ENCODE measurements at regions of chr2 and their contacts with region 1.

Region 1: GRCh38 chr2:231715258-231715997 is 7.1 kb downstream of the PTMA start:
- DNase-seq: peak; percentile 81
- H3K4me3 ChIP-seq: no peak overlapping the region
- H3K27ac ChIP-seq: peak overlapping the region in 3 of 4 donors; percentile 76 to 85 (median 83)
- H3K4me1 ChIP-seq: peaks cover 20 to 37% (median 22%) of the 10 kb centered on the region in 4 donors
- H3K27me3 ChIP-seq: no peaks in the 10 kb centered on the region
- CTCF ChIP-seq: peak; percentile 91 to 98 (median 93)
- EP300 ChIP-seq: no peak
- POLR2A ChIP-seq: no peak

Region 2: DNA sequence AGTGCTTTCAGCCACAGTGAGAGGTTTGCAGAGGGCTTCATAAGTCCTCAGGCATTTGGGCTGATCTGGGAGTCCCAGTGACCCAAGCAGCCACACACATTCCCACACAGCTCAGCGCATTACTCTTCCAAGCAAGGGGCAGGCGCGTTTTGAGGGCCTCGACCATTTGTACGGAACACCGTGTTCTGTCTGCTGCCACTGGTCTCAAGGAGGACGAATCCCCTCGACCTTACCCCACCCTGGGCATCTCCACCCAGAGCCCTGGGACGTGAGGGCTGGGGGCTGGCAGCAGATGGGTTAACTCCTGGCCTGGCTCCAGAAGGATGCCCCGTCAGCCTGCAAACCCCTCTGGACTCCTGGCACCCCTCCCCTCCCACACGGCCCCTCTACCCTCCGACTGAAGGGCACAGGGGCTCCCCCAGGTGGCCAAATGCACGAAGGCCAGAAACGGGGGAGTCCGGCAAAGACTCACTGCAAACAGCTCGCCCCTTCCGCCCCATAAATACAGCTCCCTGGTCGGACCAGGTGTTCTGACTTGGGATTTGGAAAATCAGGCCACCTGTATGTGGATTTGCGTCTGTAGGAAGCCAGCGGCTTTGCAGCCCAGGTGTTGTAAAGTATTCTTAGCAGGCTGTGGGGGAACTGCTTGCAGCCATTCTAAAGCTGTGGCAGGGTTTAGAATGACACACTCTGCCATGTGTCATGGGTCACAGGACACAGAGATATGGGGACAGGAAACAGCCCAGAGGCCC is 40.7 kb before region 1 on chr2:
- in situ Hi-C with region 1: loop called in 2 of 4 experiments (anchors 5 kb)
- intact Hi-C with region 1: loop called (anchors 1 kb)
- DNase-seq: peak; percentile 83
- H3K4me3 ChIP-seq: no peak overlapping the region
- H3K27ac ChIP-seq: peak overlapping the region; percentile 96 to 100 (median 98)
- H3K4me1 ChIP-seq: peaks cover 49 to 63% (median 56%) of the 10 kb centered on the region in 4 donors
- H3K27me3 ChIP-seq: no peaks in the 10 kb centered on the region
- CTCF ChIP-seq: peak; percentile 76 to 94 (median 88)
- EP300 ChIP-seq: no peak
- POLR2A ChIP-seq: no peak

Region 3: GRCh38 chr2:233108611-233109490 is 1393.4 kb after region 1 on chr2:
- in situ Hi-C with region 1: no loop called
- intact Hi-C with region 1: no loop called
- DNase-seq: no peak
- H3K4me3 ChIP-seq: no peak overlapping the region
- H3K27ac ChIP-seq: no peak overlapping the region
- H3K4me1 ChIP-seq: no peaks in the 10 kb centered on the region
- H3K27me3 ChIP-seq: no peaks in the 10 kb centered on the region
- CTCF ChIP-seq: no peak
- EP300 ChIP-seq: no peak
- POLR2A ChIP-seq: no peak